OCI-LY7 (cell line): ENCODE measurements at regions of chr14 and their contacts with region 1.

Region 1: DNA sequence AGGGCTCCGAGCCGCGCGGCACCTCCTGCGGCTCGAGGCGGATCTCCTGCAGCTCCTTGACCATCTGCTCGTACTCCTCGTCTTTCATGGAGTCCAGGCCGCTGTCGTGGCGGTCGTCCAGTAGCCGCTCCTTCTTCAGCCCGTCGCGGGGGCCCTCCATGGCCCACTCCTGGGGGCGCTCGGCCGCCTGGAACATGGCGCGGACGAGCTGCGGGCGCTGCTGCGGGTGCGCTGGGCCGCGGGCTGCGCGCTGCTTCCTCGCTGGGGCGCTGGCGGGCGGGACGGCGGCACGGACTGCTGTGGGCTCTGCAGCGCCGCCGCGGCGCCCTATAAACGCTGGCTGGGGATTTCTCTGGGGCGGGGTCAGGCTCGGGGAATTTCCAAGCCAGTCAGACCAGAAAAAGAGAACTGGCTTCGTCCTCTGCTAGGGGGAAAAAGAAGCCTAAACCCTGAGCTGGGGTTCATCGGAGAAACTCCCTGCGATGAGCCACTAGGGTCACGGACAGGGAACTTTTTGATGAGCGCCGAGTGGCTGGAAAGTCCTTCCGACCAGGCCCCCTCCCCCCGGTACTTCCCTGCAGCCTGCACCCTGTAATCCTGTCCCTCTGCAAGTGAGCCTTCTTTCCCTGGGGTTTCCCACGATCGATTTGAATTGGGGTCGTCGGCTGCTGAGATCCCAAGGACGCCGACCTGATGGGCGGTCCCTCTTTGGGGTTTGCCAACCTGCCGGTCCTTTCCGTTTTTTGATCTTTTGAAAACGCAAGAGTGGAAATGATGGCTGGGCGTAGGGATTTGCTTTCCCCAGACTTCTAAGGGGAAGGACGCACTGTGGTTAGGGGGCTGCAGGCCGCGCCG is at the start of gene NFKBIA:
- DNase-seq: peak; percentile 91
- H3K4me3 ChIP-seq: peak within 1 kb of the TSS; percentile 93
- H3K27ac ChIP-seq: peak within 1 kb of the TSS; percentile 79
- H3K4me1 ChIP-seq: peaks cover 47% of the 10 kb centered on the region
- CTCF ChIP-seq: peak; percentile 73
- total RNA-seq, gene NFKBIA: 100 and 109 TPM in 2 replicates

Region 2: GRCh38 chr14:34982417-34983147 is 422.1 kb before region 1 on chr14 and contains the start of gene SRP54:
- CTCF ChIA-PET with region 1: no interaction called
- POLR2A ChIA-PET with region 1: interaction called, 3 read pairs
- intact Hi-C with region 1: loop called (anchors 5 kb)
- DNase-seq: peak; percentile 99
- H3K4me3 ChIP-seq: peak within 1 kb of the TSS; percentile 95
- H3K27ac ChIP-seq: peak within 1 kb of the TSS; percentile 91
- H3K4me1 ChIP-seq: peaks cover 30% of the 10 kb centered on the region
- CTCF ChIP-seq: no peak
- total RNA-seq, gene SRP54: 50.9 and 53.8 TPM in 2 replicates

Region 3: GRCh38 chr14:35121887-35122695 is 282.6 kb before region 1 on chr14 and contains the starts of genes PPP2R3C and PRORP:
- CTCF ChIA-PET with region 1: no interaction called
- POLR2A ChIA-PET with region 1: interaction called, 4 read pairs
- intact Hi-C with region 1: loop called (anchors 5 kb)
- DNase-seq: peak; percentile 97
- H3K4me3 ChIP-seq: peak within 1 kb of the TSS; percentile 85
- H3K27ac ChIP-seq: peak within 1 kb of the TSS; percentile 81
- H3K4me1 ChIP-seq: peaks cover 38% of the 10 kb centered on the region
- CTCF ChIP-seq: no peak
- total RNA-seq, gene PPP2R3C: 50.8 and 59.4 TPM in 2 replicates
- total RNA-seq, gene PRORP: 38.7 and 52.2 TPM in 2 replicates

Region 4: DNA sequence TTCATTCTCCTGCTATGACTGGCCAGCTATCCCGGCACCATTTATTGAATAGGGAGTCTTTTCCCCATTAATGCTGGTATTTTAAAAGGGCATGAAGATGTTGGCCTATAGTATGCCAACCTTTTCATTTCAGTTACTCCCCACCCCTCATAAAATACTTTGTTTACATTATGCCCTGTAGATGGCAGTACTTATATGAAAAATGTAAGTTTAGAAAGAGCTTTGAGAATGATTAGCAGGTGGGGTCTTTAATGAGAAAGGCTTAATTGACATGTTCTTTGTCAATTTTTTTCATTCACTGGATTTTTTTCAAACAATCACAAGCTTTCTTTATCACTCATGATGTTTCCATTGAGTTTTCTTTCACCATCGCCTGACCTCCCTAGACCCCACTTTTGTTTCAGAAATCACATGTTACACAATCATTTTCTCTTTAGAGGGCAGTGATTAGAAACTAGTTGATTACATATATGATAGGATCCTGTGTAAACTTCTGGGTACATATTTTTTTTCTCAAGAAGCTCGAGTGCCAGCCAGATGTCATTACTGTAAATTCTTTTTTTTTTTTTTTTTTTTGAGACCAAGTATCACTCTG is 175.1 kb before region 1 on chr14:
- CTCF ChIA-PET with region 1: interaction called, 4 read pairs
- POLR2A ChIA-PET with region 1: interaction called, 6 read pairs
- intact Hi-C with region 1: loop called (anchors 1 kb)
- DNase-seq: peak; percentile 61
- H3K4me3 ChIP-seq: no peak overlapping the region
- H3K27ac ChIP-seq: no peak overlapping the region
- H3K4me1 ChIP-seq: peaks cover 7% of the 10 kb centered on the region
- CTCF ChIP-seq: peak; percentile 87

Region 5: DNA sequence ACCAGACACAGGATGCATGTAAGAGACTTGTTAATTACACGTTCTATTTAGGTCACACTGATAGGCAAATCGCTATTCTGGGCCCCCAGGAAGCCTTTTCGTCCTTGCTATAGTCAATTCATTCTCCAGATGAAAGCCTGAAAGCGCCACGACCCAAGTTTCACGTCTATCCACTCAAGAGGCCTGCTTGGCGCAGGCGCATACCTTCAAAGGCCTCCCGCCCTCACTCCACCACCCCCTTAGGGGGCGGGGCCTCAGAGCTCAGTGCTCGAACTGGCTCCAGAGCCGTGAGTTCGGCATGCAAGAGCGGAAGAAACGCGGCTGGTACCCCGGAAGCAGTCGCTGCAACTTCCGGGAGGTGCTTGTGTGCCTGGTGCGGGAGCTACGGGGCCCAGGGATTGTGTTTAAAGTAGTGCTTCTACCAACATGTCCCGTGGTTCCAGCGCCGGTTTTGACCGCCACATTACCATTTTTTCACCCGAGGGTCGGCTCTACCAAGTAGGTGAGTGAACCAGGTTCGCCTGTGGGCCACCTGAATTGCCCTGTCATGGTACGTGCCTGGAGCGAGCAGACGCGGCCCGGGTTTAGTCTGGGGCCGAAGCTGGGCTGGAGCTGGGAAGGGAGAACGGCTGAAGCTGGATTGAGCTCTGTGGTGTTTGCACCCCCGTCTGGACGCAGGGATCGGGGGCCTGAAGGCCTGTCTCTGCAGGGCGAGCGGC is 112.5 kb before region 1 on chr14 and contains the start of gene PSMA6:
- CTCF ChIA-PET with region 1: interaction called, 3 read pairs
- POLR2A ChIA-PET with region 1: interaction called, 37 read pairs
- intact Hi-C with region 1: loop called (anchors 1 kb)
- DNase-seq: peak; percentile 100
- H3K4me3 ChIP-seq: peak within 1 kb of the TSS; percentile 96
- H3K27ac ChIP-seq: peak within 1 kb of the TSS; percentile 99
- H3K4me1 ChIP-seq: peaks cover 69% of the 10 kb centered on the region
- CTCF ChIP-seq: no peak
- total RNA-seq, gene PSMA6: 208 and 216 TPM in 2 replicates